PC-9 (cell line): ENCODE measurements at regions of chr2 and their contacts with region 1.

Region 1: DNA sequence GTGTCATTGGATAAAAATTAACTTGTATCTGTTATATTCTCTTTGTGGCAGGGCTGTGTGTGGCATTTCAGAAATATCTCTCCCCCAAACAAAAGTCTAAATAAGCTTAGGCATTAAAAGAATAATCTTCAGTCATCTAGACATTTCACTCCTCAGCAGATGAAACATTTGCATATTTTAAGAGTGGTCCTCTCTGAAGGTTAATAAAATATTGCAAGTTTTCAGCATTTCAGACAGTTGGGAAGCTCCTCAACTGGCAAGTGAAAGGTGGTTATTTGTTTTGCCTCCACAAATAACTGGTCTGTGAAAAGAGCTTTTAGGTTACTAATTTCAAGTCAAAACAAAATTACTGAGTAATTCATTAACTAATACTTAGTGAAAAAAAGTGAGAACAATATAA is 462.6 kb downstream of the EPHA4 start:
- DNase-seq: no peak
- H3K4me3 ChIP-seq: no peak overlapping the region
- H3K27ac ChIP-seq: no peak overlapping the region
- H3K4me1 ChIP-seq: no peaks in the 10 kb centered on the region
- H3K27me3 ChIP-seq: no peaks in the 10 kb centered on the region
- CTCF ChIP-seq: no peak

Region 2: GRCh38 chr2:220499225-220499624 is 610.3 kb before region 1 on chr2:
- CTCF ChIA-PET with region 1: no interaction called
- POLR2A ChIA-PET with region 1: no interaction called
- intact Hi-C with region 1: no loop called
- DNase-seq: peak in 1 of 2 experiments; percentile 41
- H3K4me3 ChIP-seq: no peak overlapping the region
- H3K27ac ChIP-seq: peak overlapping the region; percentile 32; the same call in 1 of the 2 replicates
- H3K4me1 ChIP-seq: peaks cover 13% of the 10 kb centered on the region
- H3K27me3 ChIP-seq: no peaks in the 10 kb centered on the region
- CTCF ChIP-seq: no peak

Region 3: GRCh38 chr2:221095356-221095755 is 14.2 kb before region 1 on chr2:
- CTCF ChIA-PET with region 1: no interaction called
- POLR2A ChIA-PET with region 1: interaction called, 12 read pairs
- intact Hi-C with region 1: no loop called
- DNase-seq: no peak
- H3K4me3 ChIP-seq: no peak overlapping the region
- H3K27ac ChIP-seq: no peak overlapping the region
- H3K4me1 ChIP-seq: no peaks in the 10 kb centered on the region
- H3K27me3 ChIP-seq: no peaks in the 10 kb centered on the region
- CTCF ChIP-seq: no peak